CD8-positive, alpha-beta memory T cell (primary cell): ENCODE measurements at regions of chr2 and their contacts with region 1.

Region 1: GRCh38 chr2:75595551-75596395 is 35.0 kb upstream of the EVA1A start:
- DNase-seq: no peak
- H3K4me3 ChIP-seq: no peak overlapping the region
- H3K4me3 Mint-ChIP-seq: no peak overlapping the region
- H3K27ac ChIP-seq: no peak overlapping the region
- H3K27ac Mint-ChIP-seq: no peak overlapping the region
- H3K4me1 ChIP-seq: no peaks in the 10 kb centered on the region
- H3K4me1 Mint-ChIP-seq: no peaks in the 10 kb centered on the region
- H3K27me3 ChIP-seq: no peaks in the 10 kb centered on the region
- H3K27me3 Mint-ChIP-seq: peaks cover 0 to 3% of the 10 kb centered on the region in 2 donors

Region 2: DNA sequence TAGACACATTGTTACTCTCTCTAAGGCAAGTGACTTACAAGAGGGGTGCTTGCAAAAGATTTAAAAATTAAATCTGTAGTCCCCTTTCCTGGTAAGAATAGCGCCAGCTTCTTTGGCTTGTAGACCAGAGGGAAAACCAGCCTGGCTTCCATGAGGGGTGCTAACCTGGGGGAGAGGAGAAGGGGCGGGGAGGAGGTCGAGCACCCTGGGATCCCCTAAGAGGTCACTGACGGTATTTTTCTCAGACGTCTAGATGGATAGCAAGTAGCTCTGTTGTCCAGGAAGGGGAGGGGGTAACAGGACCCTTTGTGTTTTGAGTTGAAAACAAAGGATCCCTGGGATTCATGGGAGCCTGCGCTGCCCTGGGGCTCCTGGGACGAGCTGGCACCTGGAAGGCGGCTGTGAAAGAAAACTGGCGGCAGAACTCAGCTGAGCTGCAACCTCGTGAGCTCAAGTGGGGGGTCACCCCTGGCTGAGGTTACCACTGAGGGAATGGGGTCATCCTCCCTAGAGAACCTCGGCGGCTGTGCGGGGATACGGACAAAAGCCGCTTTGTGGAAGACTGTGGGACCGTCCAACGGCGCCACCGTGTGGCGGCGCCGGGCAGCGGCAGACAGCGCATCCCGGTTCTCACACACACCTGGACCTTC is 13.0 kb after region 1 on chr2:
- CTCF ChIA-PET with region 1: interaction called, 10 read pairs
- POLR2A ChIA-PET with region 1: no interaction called
- DNase-seq: peak; percentile 13 to 57 (median 26)
- H3K4me3 ChIP-seq: no peak overlapping the region
- H3K4me3 Mint-ChIP-seq: peak overlapping the region in 4 of 7 donors; percentile 8 to 37 (median 30)
- H3K27ac ChIP-seq: no peak overlapping the region
- H3K27ac Mint-ChIP-seq: no peak overlapping the region
- H3K4me1 ChIP-seq: peaks cover 4% of the 10 kb centered on the region
- H3K4me1 Mint-ChIP-seq: peaks cover 0 to 6% (median 0%) of the 10 kb centered on the region in 3 donors
- H3K27me3 ChIP-seq: peaks cover 10% of the 10 kb centered on the region
- H3K27me3 Mint-ChIP-seq: peaks cover 41 to 74% of the 10 kb centered on the region in 2 donors